Motor neuron (in vitro differentiated cells): ENCODE measurements at regions of chr5 and their contacts with region 1.

Region 1: GRCh38 chr5:149852641-149853330 is 91.8 kb downstream of the PDE6A start:
- ATAC-seq: peak; percentile 56 to 93 (median 80)
- H3K4me3 ChIP-seq: no peak overlapping the region
- H3K27ac ChIP-seq: no peak overlapping the region
- H3K4me1 ChIP-seq: no peaks in the 10 kb centered on the region

Region 2: GRCh38 chr5:149990518-149991376 is 138.0 kb after region 1 on chr5:
- in situ Hi-C with region 1: loop called in 5 of 9 experiments (anchors 10 to 25 kb)
- ATAC-seq: peak; percentile 74 to 90 (median 78)
- H3K4me3 ChIP-seq: no peak overlapping the region
- H3K27ac ChIP-seq: no peak overlapping the region
- H3K4me1 ChIP-seq: peaks cover 0 to 10% of the 10 kb centered on the region in 2 donors

Region 3: GRCh38 chr5:150286890-150287219 is 434.1 kb after region 1 on chr5:
- in situ Hi-C with region 1: no loop called
- ATAC-seq: peak in 2 of 8 experiments; percentile 6 to 88
- H3K4me3 ChIP-seq: no peak overlapping the region
- H3K27ac ChIP-seq: no peak overlapping the region
- H3K4me1 ChIP-seq: peaks cover 31 to 52% of the 10 kb centered on the region in 2 donors